Calu3 (cell line): ENCODE measurements at regions of chr1 and their contacts with region 1.

Region 1: DNA sequence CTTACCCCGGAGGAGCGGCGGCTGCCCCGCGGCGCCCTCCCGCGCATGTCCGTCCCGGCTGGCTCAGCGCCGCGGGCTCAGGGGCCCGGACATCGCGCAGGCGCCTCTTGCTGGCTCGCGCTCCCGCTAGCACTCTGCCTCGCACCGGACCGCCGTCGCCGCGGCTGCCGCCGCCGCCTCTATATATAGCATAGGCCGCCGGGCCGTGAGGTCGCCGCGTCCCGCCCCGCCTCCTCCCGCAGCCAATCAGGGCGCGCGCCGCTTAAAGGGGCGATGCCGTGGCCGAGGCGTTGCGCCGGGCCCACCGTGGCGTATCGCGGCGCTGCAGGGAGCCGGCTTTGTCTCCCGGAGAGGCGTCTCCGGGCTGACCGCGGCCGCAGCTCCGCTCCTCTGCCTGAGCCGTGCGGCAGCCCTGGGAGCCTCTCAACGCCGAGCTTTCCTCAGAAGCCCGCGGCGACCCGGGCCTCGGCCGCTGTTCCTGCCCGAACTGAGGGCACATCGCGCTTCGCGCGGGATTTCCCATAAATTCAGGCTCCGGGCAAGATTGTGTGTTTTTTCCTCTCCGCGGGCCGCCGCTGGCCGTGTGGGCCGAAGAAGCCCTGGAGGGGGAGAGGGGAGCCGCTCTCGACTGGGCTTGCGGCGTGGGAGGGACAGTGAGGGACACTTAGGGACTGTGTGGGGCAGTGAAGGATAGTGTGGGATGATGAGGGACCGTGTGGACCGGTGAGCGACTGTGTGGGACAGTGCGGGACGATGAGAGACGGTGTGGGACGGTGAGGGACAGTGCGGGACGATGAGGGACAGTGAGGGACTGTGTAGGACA is at the start of gene ERRFI1:
- DNase-seq: peak; percentile 94
- H3K4me3 Mint-ChIP-seq: peak within 1 kb of the TSS; percentile 97
- H3K27ac Mint-ChIP-seq: peak within 1 kb of the TSS; percentile 100
- H3K4me1 Mint-ChIP-seq: peaks cover 25% of the 10 kb centered on the region
- H3K27me3 Mint-ChIP-seq: no peaks in the 10 kb centered on the region
- CTCF ChIP-seq: no peak
- total RNA-seq, gene ERRFI1: 74.9 and 83.0 TPM in 2 replicates

Region 2: GRCh38 chr1:8182034-8182761 is 155.8 kb after region 1 on chr1:
- CTCF ChIA-PET with region 1: no interaction called
- intact Hi-C with region 1: loop called (anchors 5 kb)
- DNase-seq: peak; percentile 68
- H3K4me3 Mint-ChIP-seq: peak overlapping the region; percentile 44
- H3K27ac Mint-ChIP-seq: peak overlapping the region; percentile 91
- H3K4me1 Mint-ChIP-seq: no peaks in the 10 kb centered on the region
- H3K27me3 Mint-ChIP-seq: no peaks in the 10 kb centered on the region
- CTCF ChIP-seq: no peak

Region 3: DNA sequence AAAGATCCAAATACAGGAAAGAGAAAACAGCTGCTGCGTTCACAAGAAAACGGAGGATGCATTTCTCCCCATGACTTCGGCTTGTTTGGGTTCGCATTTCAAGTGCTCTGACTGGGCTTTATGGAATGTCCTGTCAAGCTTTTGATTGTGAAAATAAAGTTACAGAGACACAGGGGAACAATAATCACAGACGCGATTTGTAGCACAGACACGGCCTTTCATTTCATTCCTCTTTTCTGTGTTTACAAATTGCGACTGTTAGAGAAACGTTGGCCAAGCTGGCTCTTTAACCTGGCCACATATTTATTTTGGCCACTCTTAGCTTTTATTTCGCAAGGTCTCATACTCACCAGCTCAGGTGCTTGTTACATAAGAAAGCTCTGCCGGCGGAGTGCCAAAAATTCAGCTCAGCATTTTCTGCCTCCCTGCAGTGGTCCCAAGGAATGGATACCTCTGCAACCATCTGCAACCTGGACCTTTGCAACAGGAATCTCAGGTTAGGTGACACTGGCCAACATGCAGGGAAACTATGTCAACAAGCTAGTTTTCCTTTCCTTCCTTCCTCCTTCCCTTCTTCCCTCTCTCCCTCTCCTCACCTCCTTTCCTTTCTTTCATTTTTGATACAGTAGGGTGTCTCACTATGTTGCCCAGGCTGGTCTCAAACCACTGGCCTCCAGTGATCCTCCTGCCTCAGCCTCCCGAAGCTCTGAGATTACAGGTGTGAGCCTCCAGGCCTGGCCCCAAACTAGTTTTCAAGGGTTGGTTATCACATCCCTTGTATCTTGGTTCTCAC is 233.3 kb after region 1 on chr1:
- CTCF ChIA-PET with region 1: no interaction called
- intact Hi-C with region 1: loop called (anchors 5 kb)
- DNase-seq: peak; percentile 66
- H3K4me3 Mint-ChIP-seq: peak overlapping the region; percentile 10
- H3K27ac Mint-ChIP-seq: peak overlapping the region; percentile 82
- H3K4me1 Mint-ChIP-seq: peaks cover 38% of the 10 kb centered on the region
- H3K27me3 Mint-ChIP-seq: no peaks in the 10 kb centered on the region
- CTCF ChIP-seq: no peak